CD4-positive, alpha-beta T cell (primary cell): ENCODE measurements at regions of chr1 and their contacts with region 1.

Region 1: GRCh38 chr1:169809370-169810095 is 14.8 kb upstream of the METTL18 start:
- DNase-seq: peak in 5 of 14 experiments; percentile 5 to 67 (median 59)
- ATAC-seq: no peak
- H3K4me3 ChIP-seq: no peak overlapping the region
- H3K4me3 Mint-ChIP-seq: no peak overlapping the region
- H3K27ac ChIP-seq: no peak overlapping the region
- H3K27ac Mint-ChIP-seq: no peak overlapping the region
- H3K4me1 ChIP-seq: no peaks in the 10 kb centered on the region
- H3K4me1 Mint-ChIP-seq: no peaks in the 10 kb centered on the region
- H3K27me3 ChIP-seq: no peaks in the 10 kb centered on the region
- H3K27me3 Mint-ChIP-seq: no peaks in the 10 kb centered on the region
- CTCF ChIP-seq: peak; percentile 79

Region 2: DNA sequence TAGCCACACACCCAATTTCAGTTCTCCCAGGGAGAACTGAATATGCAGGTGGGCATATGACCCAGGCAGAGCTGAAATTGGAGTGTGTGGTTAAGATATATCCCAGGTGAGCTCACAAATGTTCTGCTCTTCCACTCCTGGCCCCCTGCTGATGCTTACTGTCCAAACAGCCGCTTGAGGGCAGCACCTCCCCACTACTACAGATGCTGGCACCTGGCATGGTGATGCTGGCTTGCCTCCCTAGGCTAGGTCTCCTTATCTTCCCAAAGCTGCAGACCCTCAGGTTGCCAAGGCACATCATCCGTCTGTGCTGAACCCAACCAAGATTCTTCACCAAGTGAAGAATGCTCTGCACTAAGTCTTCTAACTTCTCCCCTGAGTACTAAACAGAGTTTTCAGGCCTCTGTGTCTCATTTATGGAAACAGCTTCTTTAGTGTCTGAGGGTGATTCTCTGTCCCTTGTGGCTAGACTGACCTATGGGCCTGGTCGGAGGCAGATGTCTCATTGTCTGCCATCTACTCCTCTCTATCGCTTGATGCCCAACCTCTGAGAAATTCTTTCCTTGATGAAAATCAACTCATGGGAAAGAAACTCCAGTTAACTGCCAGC is 1205.9 kb before region 1 on chr1:
- CTCF ChIA-PET with region 1: no interaction called
- POLR2A ChIA-PET with region 1: no interaction called
- intact Hi-C with region 1: loop called in 1 of 2 experiments (anchors 5 kb)
- DNase-seq: peak; percentile 48 to 81 (median 59)
- ATAC-seq: peak; percentile 82
- H3K4me3 ChIP-seq: no peak overlapping the region
- H3K4me3 Mint-ChIP-seq: no peak overlapping the region
- H3K27ac ChIP-seq: no peak overlapping the region
- H3K27ac Mint-ChIP-seq: no peak overlapping the region
- H3K4me1 ChIP-seq: no peaks in the 10 kb centered on the region
- H3K4me1 Mint-ChIP-seq: no peaks in the 10 kb centered on the region
- H3K27me3 ChIP-seq: no peaks in the 10 kb centered on the region
- H3K27me3 Mint-ChIP-seq: peaks cover 4% of the 10 kb centered on the region
- CTCF ChIP-seq: peak; percentile 68

Region 3: GRCh38 chr1:169485544-169486278 is 323.8 kb before region 1 on chr1 and contains the start of gene SLC19A2:
- CTCF ChIA-PET with region 1: no interaction called
- POLR2A ChIA-PET with region 1: no interaction called
- intact Hi-C with region 1: loop called in 1 of 2 experiments (anchors 5 kb)
- DNase-seq: peak; percentile 82 to 97 (median 90)
- ATAC-seq: peak; percentile 99
- H3K4me3 ChIP-seq: peak within 1 kb of the TSS; percentile 73
- H3K4me3 Mint-ChIP-seq: peak within 1 kb of the TSS; percentile 98
- H3K27ac ChIP-seq: peak within 1 kb of the TSS; percentile 54 to 65
- H3K27ac Mint-ChIP-seq: peak within 1 kb of the TSS; percentile 92
- H3K4me1 ChIP-seq: peaks cover 20% of the 10 kb centered on the region
- H3K4me1 Mint-ChIP-seq: peaks cover 48% of the 10 kb centered on the region
- H3K27me3 ChIP-seq: no peaks in the 10 kb centered on the region
- H3K27me3 Mint-ChIP-seq: no peaks in the 10 kb centered on the region
- CTCF ChIP-seq: peak; percentile 44
- total RNA-seq, gene SLC19A2: 3.6 to 3.7 TPM

Region 4: DNA sequence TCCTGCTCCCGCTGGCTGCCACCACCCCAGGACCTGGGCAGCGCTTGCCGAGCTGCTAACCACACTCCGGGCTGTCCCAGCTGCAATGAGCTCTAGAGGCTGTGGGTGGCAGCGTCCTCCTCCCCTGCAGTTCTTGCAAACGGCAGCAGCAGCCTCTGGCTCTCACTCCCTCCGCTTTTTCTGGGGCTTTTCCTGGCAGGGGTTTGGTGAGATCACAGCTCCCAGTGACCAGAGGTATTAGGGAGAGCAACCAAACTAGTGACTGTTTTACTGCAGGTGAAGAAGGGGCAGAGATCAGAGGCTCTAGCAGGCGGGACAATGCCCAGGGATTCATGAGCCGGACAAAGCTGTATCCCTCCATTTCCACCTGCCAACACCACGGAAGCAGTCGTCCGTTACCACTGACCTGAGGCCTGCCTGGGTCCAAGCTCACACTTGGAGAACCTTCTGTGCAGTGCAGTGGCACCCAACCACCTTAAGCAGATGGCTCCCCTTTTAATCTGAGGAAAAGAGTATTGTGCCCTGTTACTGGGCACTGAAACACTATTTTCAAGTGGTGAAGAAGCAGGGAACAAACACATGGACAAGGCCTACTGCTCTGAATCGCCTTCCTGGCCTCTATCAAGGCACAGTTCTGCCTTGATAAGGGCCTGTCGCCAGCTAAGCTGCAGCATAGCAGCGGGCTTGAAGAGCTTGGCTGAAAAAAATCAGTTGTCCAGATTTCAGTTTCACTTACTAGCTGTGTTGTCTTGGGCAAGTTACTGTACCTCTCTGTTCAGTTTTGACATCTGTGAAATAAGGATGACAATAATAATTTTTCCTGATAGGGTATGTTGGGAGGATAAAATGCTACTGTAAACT is 222.9 kb before region 1 on chr1 and contains the start of gene F5:
- CTCF ChIA-PET with region 1: no interaction called
- POLR2A ChIA-PET with region 1: no interaction called
- intact Hi-C with region 1: loop called in 1 of 2 experiments (anchors 1 kb)
- DNase-seq: peak; percentile 65 to 88 (median 72)
- ATAC-seq: peak; percentile 99
- H3K4me3 ChIP-seq: peak within 1 kb of the TSS; percentile 64
- H3K4me3 Mint-ChIP-seq: peak within 1 kb of the TSS; percentile 91
- H3K27ac ChIP-seq: no peak within 1 kb of the TSS
- H3K27ac Mint-ChIP-seq: peak within 1 kb of the TSS; percentile 71
- H3K4me1 ChIP-seq: peaks cover 19% of the 10 kb centered on the region
- H3K4me1 Mint-ChIP-seq: peaks cover 53% of the 10 kb centered on the region
- H3K27me3 ChIP-seq: no peaks in the 10 kb centered on the region
- H3K27me3 Mint-ChIP-seq: no peaks in the 10 kb centered on the region
- CTCF ChIP-seq: peak; percentile 71
- total RNA-seq, gene F5: 5.4 to 6.2 TPM

Region 5: GRCh38 chr1:169618367-169618766 is 191.2 kb before region 1 on chr1:
- CTCF ChIA-PET with region 1: no interaction called
- POLR2A ChIA-PET with region 1: no interaction called
- intact Hi-C with region 1: no loop called
- DNase-seq: no peak
- ATAC-seq: no peak
- H3K4me3 ChIP-seq: no peak overlapping the region
- H3K4me3 Mint-ChIP-seq: no peak overlapping the region
- H3K27ac ChIP-seq: no peak overlapping the region
- H3K27ac Mint-ChIP-seq: no peak overlapping the region
- H3K4me1 ChIP-seq: peaks cover 5% of the 10 kb centered on the region
- H3K4me1 Mint-ChIP-seq: peaks cover 52% of the 10 kb centered on the region
- H3K27me3 ChIP-seq: no peaks in the 10 kb centered on the region
- H3K27me3 Mint-ChIP-seq: no peaks in the 10 kb centered on the region
- CTCF ChIP-seq: no peak

Region 6: DNA sequence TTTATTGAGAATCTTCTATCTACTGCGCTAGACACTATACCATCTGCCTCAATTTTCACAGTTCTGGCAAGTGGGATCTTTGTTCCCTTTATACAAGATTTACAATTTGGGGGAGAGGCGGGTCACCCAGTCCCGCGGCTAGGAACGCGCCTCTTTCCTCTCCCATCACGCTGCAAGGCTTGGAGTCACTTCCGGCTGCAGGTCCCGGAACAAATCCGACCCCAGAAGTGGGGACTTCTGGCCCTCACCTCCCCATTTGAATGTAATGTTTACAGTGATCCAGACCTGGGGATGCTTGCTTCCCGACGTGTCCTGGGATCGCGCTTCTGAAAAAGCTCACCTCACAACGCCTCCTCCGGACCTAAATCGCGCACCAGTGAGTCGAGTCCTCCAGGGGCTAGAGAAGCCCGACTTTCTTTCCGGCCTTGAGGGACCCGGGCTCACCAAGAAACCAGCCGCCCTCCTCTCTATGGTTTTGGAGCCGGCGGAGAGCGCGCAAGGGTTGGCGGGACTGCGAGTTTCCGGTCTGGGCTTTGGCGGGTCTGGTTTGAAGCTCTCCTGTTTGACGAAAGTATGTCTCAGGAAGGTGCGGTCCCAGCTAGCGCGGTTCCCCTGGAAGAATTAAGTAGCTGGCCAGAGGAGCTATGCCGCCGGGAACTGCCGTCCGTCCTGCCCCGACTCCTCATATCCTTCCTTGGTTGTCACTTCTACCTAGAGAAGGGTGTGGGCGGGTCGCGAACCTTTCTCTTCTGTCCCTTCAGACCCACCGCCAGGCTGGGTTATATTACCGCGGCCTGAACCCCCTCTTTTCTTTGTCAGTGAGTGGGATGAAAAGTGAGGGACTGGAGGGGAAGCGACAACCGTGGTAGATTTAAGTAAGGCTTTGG is 14.8 kb before region 1 on chr1 and contains the start of gene METTL18:
- CTCF ChIA-PET with region 1: interaction called, 6 read pairs
- POLR2A ChIA-PET with region 1: interaction called, 11 read pairs
- intact Hi-C with region 1: no loop called
- DNase-seq: peak; percentile 82 to 96 (median 88)
- ATAC-seq: peak; percentile 97
- H3K4me3 ChIP-seq: peak within 1 kb of the TSS; percentile 81
- H3K4me3 Mint-ChIP-seq: peak within 1 kb of the TSS; percentile 99
- H3K27ac ChIP-seq: peak within 1 kb of the TSS; percentile 89 to 94
- H3K27ac Mint-ChIP-seq: peak within 1 kb of the TSS; percentile 94
- H3K4me1 ChIP-seq: peaks cover 13% of the 10 kb centered on the region
- H3K4me1 Mint-ChIP-seq: peaks cover 52% of the 10 kb centered on the region
- H3K27me3 ChIP-seq: no peaks in the 10 kb centered on the region
- H3K27me3 Mint-ChIP-seq: no peaks in the 10 kb centered on the region
- CTCF ChIP-seq: no peak
- total RNA-seq, gene METTL18: 5.1 to 5.6 TPM

Region 7: GRCh38 chr1:169893494-169894362 is 84.2 kb after region 1 on chr1 and contains the start of gene SCYL3:
- CTCF ChIA-PET with region 1: no interaction called
- POLR2A ChIA-PET with region 1: no interaction called
- intact Hi-C with region 1: no loop called
- DNase-seq: peak; percentile 78 to 97 (median 86)
- ATAC-seq: peak; percentile 82
- H3K4me3 ChIP-seq: peak within 1 kb of the TSS; percentile 79
- H3K4me3 Mint-ChIP-seq: peak within 1 kb of the TSS; percentile 97
- H3K27ac ChIP-seq: peak within 1 kb of the TSS; percentile 98 to 100
- H3K27ac Mint-ChIP-seq: peak within 1 kb of the TSS; percentile 99
- H3K4me1 ChIP-seq: peaks cover 23% of the 10 kb centered on the region
- H3K4me1 Mint-ChIP-seq: peaks cover 53% of the 10 kb centered on the region
- H3K27me3 ChIP-seq: no peaks in the 10 kb centered on the region
- H3K27me3 Mint-ChIP-seq: no peaks in the 10 kb centered on the region
- CTCF ChIP-seq: no peak
- total RNA-seq, gene SCYL3: 3.5 to 3.6 TPM